ENCODE measurements at regions of chr14 and their contacts with region 1.

Region 1: GRCh38 chr14:82855912-82856391 is 1322.3 kb upstream of the SEL1L start:
- DNase-seq: no peak
- ATAC-seq: peak; percentile 66
- H3K4me3 ChIP-seq: no peak overlapping the region
- H3K27ac ChIP-seq: no peak overlapping the region
- H3K4me1 ChIP-seq: no peaks in the 10 kb centered on the region
- H3K27me3 ChIP-seq: no peaks in the 10 kb centered on the region
- CTCF ChIP-seq: peak in 1 of 3 experiments; percentile 27; a peak in 2 of 6 replicates
- EP300 ChIP-seq: no peak
- POLR2A ChIP-seq: no peak
- RAD21 ChIP-seq: 0 out of 2 replicates have a peak, but pooled peaks have one; percentile 26

Region 2: DNA sequence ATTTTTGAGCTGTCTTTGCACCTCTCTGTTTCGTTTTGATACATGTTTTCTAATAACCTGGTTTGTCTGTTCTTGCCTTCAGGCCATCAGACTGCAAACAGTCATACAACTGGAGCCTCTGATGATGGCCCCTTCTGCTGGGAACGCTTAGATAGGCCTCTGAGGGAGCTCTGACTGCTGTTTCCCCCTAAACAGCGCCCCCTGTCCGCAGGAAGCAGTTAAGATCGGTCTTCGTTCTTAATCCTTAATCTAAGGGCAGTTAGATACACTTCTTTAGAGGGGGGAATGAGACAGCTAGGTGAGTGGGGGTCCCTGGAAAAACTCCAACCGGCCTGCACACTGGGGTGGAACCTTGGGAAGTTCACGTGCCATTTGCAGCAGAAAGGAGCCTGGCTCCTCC is 16.5 kb after region 1 on chr14:
- CTCF ChIA-PET with region 1: interaction called, 14 read pairs
- POLR2A ChIA-PET with region 1: no interaction called
- RAD21 ChIA-PET with region 1: no interaction called
- SMC1A ChIA-PET with region 1: no interaction called
- in situ Hi-C with region 1: no loop called
- intact Hi-C with region 1: no loop called
- DNase-seq: no peak
- ATAC-seq: peak; percentile 50; the same call in 2 of the 3 replicates
- H3K4me3 ChIP-seq: no peak overlapping the region
- H3K27ac ChIP-seq: no peak overlapping the region
- H3K4me1 ChIP-seq: no peaks in the 10 kb centered on the region
- H3K27me3 ChIP-seq: no peaks in the 10 kb centered on the region
- CTCF ChIP-seq: peak in 2 of 3 experiments; percentile 19 to 41; a peak in 3 of 6 replicates
- EP300 ChIP-seq: no peak
- POLR2A ChIP-seq: no peak
- RAD21 ChIP-seq: no peak

Region 3: GRCh38 chr14:83463500-83464098 is 607.6 kb after region 1 on chr14:
- CTCF ChIA-PET with region 1: interaction called, 5 read pairs
- POLR2A ChIA-PET with region 1: no interaction called
- RAD21 ChIA-PET with region 1: no interaction called
- SMC1A ChIA-PET with region 1: interaction called, 3 read pairs
- in situ Hi-C with region 1: no loop called
- intact Hi-C with region 1: loop called (anchors 5 kb)
- DNase-seq: no peak
- ATAC-seq: peak; percentile 89
- H3K4me3 ChIP-seq: no peak overlapping the region
- H3K27ac ChIP-seq: no peak overlapping the region
- H3K4me1 ChIP-seq: no peaks in the 10 kb centered on the region
- H3K27me3 ChIP-seq: no peaks in the 10 kb centered on the region
- CTCF ChIP-seq: peak; percentile 45 to 62 (median 53)
- EP300 ChIP-seq: no peak
- POLR2A ChIP-seq: no peak
- RAD21 ChIP-seq: peak; percentile 53